ENCODE measurements at regions of chr2 and their contacts with region 1.

Region 1: GRCh38 chr2:86105252-86105968 is at the start of gene POLR1A:
- DNase-seq: peak; percentile 76
- H3K4me3 ChIP-seq: peak within 1 kb of the TSS; percentile 84
- CTCF ChIP-seq: no peak

Region 2: DNA sequence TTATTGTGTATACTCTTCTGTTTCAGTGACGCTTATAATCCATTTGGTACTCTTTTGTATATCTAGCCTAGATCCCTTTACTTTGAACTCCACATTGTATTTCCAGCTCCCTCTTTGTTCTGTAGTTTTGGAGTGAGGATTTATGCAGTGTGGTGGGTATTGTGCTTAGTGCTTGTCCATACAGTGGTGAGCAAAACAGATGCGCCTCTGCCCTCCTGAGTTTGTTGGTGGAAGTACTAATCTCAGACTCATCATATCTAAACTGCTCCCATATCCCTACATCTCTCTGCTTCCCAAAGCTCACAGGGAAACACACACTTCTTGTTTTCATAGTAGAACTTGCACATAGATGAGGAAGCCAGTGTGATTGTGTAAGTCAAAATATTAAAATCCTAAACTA is 12.7 kb after region 1 on chr2:
- CTCF ChIA-PET with region 1: no interaction called
- POLR2A ChIA-PET with region 1: interaction called, 10 read pairs
- DNase-seq: no peak
- H3K4me3 ChIP-seq: no peak overlapping the region
- CTCF ChIP-seq: no peak